Lower leg skin (tissue), 4 donors: ENCODE measurements at regions of chr2 and their contacts with region 1.

Region 1: GRCh38 chr2:138787053-138787666 is 7.0 kb upstream of the NXPH2 start:
- DNase-seq: no peak
- H3K4me3 ChIP-seq: no peak overlapping the region
- CTCF ChIP-seq: no peak
- POLR2A ChIP-seq: no peak

Region 2: GRCh38 chr2:137910641-137911040 is 876.5 kb before region 1 on chr2:
- intact Hi-C with region 1: loop called (anchors 10 kb)
- DNase-seq: no peak
- H3K4me3 ChIP-seq: no peak overlapping the region
- CTCF ChIP-seq: no peak
- POLR2A ChIP-seq: no peak

Region 3: GRCh38 chr2:138090330-138090729 is 696.8 kb before region 1 on chr2:
- intact Hi-C with region 1: loop called (anchors 10 kb)
- DNase-seq: no peak
- H3K4me3 ChIP-seq: no peak overlapping the region
- CTCF ChIP-seq: no peak
- POLR2A ChIP-seq: no peak